Activated T-helper 1 cell treated with anti-CD3 and anti-CD28 coated beads, Interleukin-12 subunit alpha, Interleukin-12 subunit beta, Interleukin-2, Interleukin-4 antibody, amounts not matched to agents 30 ng/mL and 10 ng/mL and 1 ng/mL, durations not matched to agents 14 hours and 24 hours and 36 hours (primary cell): ENCODE measurements at regions of chr2 and their contacts with region 1.

Region 1: GRCh38 chr2:143110758-143111428 is 18.3 kb upstream of the ARHGAP15 start:
- DNase-seq: peak; percentile 43
- H3K4me3 Mint-ChIP-seq: peak overlapping the region; percentile 75
- H3K27ac Mint-ChIP-seq: peak overlapping the region; percentile 85
- H3K4me1 Mint-ChIP-seq: peaks cover 46% of the 10 kb centered on the region
- H3K27me3 Mint-ChIP-seq: no peaks in the 10 kb centered on the region

Region 2: GRCh38 chr2:143034292-143035074 is 76.4 kb before region 1 on chr2:
- intact Hi-C with region 1: loop called (anchors 1 kb)
- DNase-seq: peak; percentile 48
- H3K4me3 Mint-ChIP-seq: no peak overlapping the region
- H3K27ac Mint-ChIP-seq: no peak overlapping the region
- H3K4me1 Mint-ChIP-seq: peaks cover 9% of the 10 kb centered on the region
- H3K27me3 Mint-ChIP-seq: no peaks in the 10 kb centered on the region

Region 3: GRCh38 chr2:143150287-143150686 is 39.4 kb after region 1 on chr2:
- intact Hi-C with region 1: loop called (anchors 2 kb)
- DNase-seq: no peak
- H3K4me3 Mint-ChIP-seq: peak overlapping the region; percentile 32
- H3K27ac Mint-ChIP-seq: peak overlapping the region; percentile 80
- H3K4me1 Mint-ChIP-seq: peaks cover 88% of the 10 kb centered on the region
- H3K27me3 Mint-ChIP-seq: no peaks in the 10 kb centered on the region

Region 4: DNA sequence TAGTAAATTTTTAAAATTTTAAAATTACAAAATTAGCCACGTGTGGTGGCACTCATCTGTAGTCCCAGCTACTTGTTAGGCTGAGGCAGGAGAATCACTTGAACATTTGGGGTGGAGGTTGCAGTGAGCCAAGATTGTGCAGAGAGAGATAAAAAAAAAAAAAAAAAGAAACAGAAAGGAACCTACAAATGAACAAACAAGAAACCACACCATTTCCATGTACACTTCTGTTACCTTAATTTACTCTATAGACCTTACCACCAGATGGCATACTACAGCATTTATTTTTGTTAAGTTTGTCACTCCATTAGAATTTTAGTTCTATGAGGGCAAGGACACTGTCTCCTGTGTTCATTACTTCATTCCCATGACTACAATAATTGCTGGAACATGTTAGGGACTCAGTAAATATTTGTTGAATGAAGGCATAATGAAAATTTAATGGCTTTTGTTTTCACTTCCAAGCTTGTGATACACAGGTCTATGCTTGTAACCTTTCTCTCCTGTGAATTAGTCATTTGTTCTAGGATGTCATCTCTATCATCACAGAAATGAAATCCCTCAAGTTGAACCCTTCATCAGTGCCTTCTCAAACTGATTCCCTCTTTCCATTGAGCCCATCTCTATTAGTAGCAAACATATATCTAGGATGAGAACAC is 94.3 kb after region 1 on chr2:
- intact Hi-C with region 1: loop called (anchors 5 kb)
- DNase-seq: no peak
- H3K4me3 Mint-ChIP-seq: no peak overlapping the region
- H3K27ac Mint-ChIP-seq: peak overlapping the region; percentile 41
- H3K4me1 Mint-ChIP-seq: peaks cover 44% of the 10 kb centered on the region
- H3K27me3 Mint-ChIP-seq: no peaks in the 10 kb centered on the region

Region 5: DNA sequence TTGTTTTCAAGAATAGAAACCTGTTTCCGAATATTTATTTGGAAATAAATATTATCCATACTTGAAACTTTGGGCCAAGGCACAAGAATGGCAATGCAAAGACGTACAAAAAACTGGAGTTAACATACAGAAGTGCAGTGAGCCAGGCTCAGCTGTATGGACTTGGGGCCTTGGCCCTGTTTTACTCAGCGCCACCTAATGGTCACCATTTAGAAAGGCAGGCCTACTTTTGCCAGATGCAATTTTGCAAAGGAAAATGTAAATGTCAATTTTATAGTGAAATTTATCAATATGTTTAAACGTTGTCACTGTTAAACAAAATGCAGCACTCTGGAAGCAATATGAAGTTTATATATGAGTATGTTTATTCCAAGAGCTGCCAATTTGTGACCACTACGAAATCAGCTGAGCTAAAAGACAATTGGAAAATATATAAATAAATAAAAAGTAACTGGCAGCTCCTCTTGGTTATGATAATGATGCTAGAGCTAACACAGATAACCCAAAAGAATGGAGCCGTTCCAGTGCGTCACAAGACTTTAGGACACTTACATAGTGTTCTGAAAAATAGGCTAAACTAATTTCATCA is 173.3 kb after region 1 on chr2:
- intact Hi-C with region 1: loop called (anchors 1 kb)
- DNase-seq: no peak
- H3K4me3 Mint-ChIP-seq: no peak overlapping the region
- H3K27ac Mint-ChIP-seq: no peak overlapping the region
- H3K4me1 Mint-ChIP-seq: peaks cover 30% of the 10 kb centered on the region
- H3K27me3 Mint-ChIP-seq: no peaks in the 10 kb centered on the region

Region 6: DNA sequence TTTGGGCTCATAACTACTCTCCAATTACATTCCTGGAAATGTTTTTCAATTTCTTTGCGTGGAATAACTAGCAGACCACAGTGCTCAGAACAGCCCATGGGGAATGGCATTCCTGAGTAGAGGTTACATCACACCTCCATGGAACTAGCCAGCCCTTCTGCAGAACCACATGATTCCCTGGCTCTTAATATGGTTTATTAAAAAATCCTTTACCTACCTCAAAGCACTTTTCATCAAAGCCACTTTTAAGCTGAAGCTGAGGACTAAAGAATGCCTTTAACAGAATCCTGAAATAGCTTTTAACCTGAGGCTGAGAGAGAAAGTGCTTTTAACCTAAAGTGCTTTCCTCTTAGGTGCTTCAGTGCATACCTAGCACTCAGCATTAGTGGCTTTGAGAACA is 394.6 kb after region 1 on chr2:
- intact Hi-C with region 1: no loop called
- DNase-seq: no peak
- H3K4me3 Mint-ChIP-seq: no peak overlapping the region
- H3K27ac Mint-ChIP-seq: no peak overlapping the region
- H3K4me1 Mint-ChIP-seq: peaks cover 5% of the 10 kb centered on the region
- H3K27me3 Mint-ChIP-seq: no peaks in the 10 kb centered on the region